Transverse colon (tissue), 4 donors: ENCODE measurements at regions of chr1 and their contacts with region 1.

Region 1: DNA sequence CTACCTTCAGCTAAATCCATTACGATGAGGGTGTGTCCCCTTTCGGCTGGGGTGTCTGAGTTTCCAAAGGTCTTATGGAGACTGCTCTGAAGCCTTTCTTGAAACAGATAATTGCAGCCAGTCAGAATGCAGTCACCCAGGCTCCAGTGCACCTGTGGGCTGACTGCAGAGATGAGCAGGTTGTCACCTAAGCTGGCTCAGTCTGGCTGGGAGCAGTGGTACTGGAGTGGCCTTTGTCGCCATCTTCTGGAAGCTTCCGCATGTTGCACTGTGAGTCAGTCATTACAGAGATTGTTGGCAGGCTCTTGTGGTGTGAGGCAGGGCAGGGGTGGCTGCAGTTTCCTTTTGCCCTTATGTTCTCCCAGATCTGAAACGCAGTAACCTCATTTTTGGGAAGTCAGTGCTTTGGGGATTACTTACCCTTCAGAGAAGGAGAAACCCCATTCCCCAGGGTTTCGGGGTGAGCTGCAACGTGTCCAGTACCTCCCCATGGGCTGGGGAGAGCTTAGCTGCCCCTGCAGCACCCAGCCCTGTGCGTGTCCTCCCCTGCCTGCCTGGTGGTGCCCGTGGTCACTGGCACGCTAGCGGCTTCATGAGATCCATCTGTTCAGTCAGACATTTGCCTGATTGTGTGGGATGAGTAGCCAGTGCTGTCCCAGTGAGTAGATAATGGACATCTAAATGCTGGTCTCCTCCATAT is 48.0 kb downstream of the SMYD2 start:
- DNase-seq: peak; percentile 83
- H3K4me3 ChIP-seq: no peak overlapping the region
- H3K27ac ChIP-seq: no peak overlapping the region
- H3K4me1 ChIP-seq: peaks cover 0 to 3% (median 0%) of the 10 kb centered on the region in 4 donors
- H3K27me3 ChIP-seq: no peaks in the 10 kb centered on the region
- CTCF ChIP-seq: peak; percentile 82 to 91 (median 88)
- EP300 ChIP-seq: no peak
- POLR2A ChIP-seq: no peak

Region 2: GRCh38 chr1:213925531-213926182 is 403.3 kb before region 1 on chr1:
- in situ Hi-C with region 1: no loop called
- intact Hi-C with region 1: no loop called
- DNase-seq: no peak
- H3K4me3 ChIP-seq: no peak overlapping the region
- H3K27ac ChIP-seq: no peak overlapping the region
- H3K4me1 ChIP-seq: no peaks in the 10 kb centered on the region
- H3K27me3 ChIP-seq: no peaks in the 10 kb centered on the region
- CTCF ChIP-seq: no peak
- EP300 ChIP-seq: no peak
- POLR2A ChIP-seq: no peak

Region 3: DNA sequence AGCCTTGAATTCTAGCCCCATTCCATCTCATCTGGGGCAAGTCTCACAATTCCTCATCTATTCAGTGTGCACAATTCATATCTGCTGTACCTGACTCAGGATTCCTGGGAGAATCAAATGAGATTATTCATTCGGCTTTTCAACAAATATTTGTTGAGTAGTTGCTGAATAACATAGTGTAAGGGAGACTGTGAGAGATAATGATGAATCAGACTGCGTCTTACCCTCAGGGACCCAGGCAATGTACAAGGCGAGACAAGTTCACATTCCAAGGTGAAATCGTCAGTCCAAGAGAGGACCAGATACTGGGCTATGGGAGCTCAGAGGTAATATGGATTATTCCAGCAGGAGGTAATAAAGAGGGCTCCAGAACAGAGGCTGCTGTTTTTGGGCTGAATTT is 115.8 kb before region 1 on chr1:
- in situ Hi-C with region 1: no loop called
- intact Hi-C with region 1: loop called (anchors 5 kb)
- DNase-seq: no peak
- H3K4me3 ChIP-seq: no peak overlapping the region
- H3K27ac ChIP-seq: no peak overlapping the region
- H3K4me1 ChIP-seq: peaks cover 0 to 4% (median 3%) of the 10 kb centered on the region in 4 donors
- H3K27me3 ChIP-seq: peaks cover 2% of the 10 kb centered on the region
- CTCF ChIP-seq: no peak
- EP300 ChIP-seq: no peak
- POLR2A ChIP-seq: no peak

Region 4: GRCh38 chr1:214261206-214262123 is 67.5 kb before region 1 on chr1:
- in situ Hi-C with region 1: loop called (anchors 5 to 10 kb)
- intact Hi-C with region 1: loop called (anchors 2 kb)
- DNase-seq: peak; percentile 83
- H3K4me3 ChIP-seq: no peak overlapping the region
- H3K27ac ChIP-seq: no peak overlapping the region
- H3K4me1 ChIP-seq: no peaks in the 10 kb centered on the region
- H3K27me3 ChIP-seq: peaks cover 60% of the 10 kb centered on the region
- CTCF ChIP-seq: peak; percentile 67 to 95 (median 89)
- EP300 ChIP-seq: no peak
- POLR2A ChIP-seq: no peak

Region 5: DNA sequence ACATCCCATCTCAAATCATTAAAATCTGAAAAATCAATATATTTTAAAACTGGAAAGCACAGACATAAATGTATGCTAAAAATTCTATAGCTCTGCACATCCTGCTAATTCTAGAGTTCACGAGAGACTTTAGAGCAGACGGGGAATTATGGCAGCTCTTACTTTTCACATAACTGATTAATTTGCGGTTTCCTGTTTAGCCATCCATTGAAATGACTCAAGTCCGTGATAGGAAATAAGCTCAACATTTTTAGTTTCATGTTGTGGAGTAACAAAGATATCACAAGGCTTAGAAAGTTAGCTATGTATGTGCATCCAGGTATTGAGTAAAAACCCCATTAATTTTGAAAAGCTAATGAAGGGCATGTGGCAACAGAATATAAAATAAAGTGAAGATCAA is 75.2 kb after region 1 on chr1:
- in situ Hi-C with region 1: no loop called
- intact Hi-C with region 1: no loop called
- DNase-seq: no peak
- H3K4me3 ChIP-seq: no peak overlapping the region
- H3K27ac ChIP-seq: no peak overlapping the region
- H3K4me1 ChIP-seq: no peaks in the 10 kb centered on the region
- H3K27me3 ChIP-seq: no peaks in the 10 kb centered on the region
- CTCF ChIP-seq: no peak
- EP300 ChIP-seq: no peak
- POLR2A ChIP-seq: no peak